Caco-2 (cell line): ENCODE measurements at regions of chr3 and their contacts with region 1.

Region 1: GRCh38 chr3:183099026-183099837 is at the start of gene MCCC1:
- DNase-seq: peak; percentile 99
- H3K4me3 ChIP-seq: peak within 1 kb of the TSS; percentile 92
- H3K4me3 Mint-ChIP-seq: peak within 1 kb of the TSS; percentile 98
- H3K27ac Mint-ChIP-seq: peak within 1 kb of the TSS; percentile 100
- H3K4me1 ChIP-seq: peaks cover 10% of the 10 kb centered on the region; the same call in 1 of the 2 replicates
- H3K4me1 Mint-ChIP-seq: peaks cover 13% of the 10 kb centered on the region
- H3K27me3 ChIP-seq: no peaks in the 10 kb centered on the region
- H3K27me3 Mint-ChIP-seq: no peaks in the 10 kb centered on the region
- CTCF ChIP-seq: no peak
- total RNA-seq, gene MCCC1: 26.2 and 42.8 TPM in 2 replicates

Region 2: GRCh38 chr3:182078316-182078715 is 1020.9 kb before region 1 on chr3:
- CTCF ChIA-PET with region 1: no interaction called
- POLR2A ChIA-PET with region 1: no interaction called
- intact Hi-C with region 1: no loop called
- DNase-seq: no peak
- H3K4me3 ChIP-seq: no peak overlapping the region
- H3K4me3 Mint-ChIP-seq: no peak overlapping the region
- H3K27ac Mint-ChIP-seq: no peak overlapping the region
- H3K4me1 ChIP-seq: peaks cover 9% of the 10 kb centered on the region; the same call in 1 of the 2 replicates
- H3K4me1 Mint-ChIP-seq: peaks cover 16% of the 10 kb centered on the region
- H3K27me3 ChIP-seq: no peaks in the 10 kb centered on the region
- H3K27me3 Mint-ChIP-seq: no peaks in the 10 kb centered on the region
- CTCF ChIP-seq: no peak

Region 3: DNA sequence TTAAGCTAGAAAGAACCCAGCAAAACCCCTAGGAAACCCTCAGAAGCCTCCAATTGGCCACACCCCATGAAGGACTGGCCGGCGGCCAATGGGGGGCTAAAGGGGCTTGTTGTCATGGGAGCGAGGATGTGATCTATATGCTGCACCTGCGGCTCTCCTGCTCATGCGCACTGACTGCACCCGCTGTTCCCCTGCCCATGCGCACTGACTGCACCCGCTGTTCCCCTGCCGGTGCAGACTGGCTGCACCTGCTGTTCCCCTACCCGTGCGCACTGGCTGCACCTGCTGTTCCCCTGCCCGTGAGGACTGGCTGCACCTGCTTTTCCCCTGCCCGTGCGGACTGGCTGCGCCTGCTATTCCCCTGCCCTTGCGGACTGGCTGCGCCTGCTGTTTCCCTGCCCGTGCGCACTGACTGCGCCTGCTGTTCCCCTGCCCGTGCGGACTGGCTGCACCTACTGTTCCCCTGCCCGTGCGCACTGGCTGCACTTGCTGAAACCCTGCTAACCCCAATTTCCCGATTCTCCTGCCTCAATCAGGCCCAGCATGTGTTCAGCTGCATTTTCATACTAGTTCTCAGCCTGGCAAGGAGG is 16.9 kb after region 1 on chr3:
- CTCF ChIA-PET with region 1: interaction called, 3 read pairs
- POLR2A ChIA-PET with region 1: no interaction called
- intact Hi-C with region 1: loop called (anchors 1 kb)
- DNase-seq: peak; percentile 77 to 79
- H3K4me3 ChIP-seq: peak overlapping the region; percentile 41
- H3K4me3 Mint-ChIP-seq: peak overlapping the region; percentile 79
- H3K27ac Mint-ChIP-seq: no peak overlapping the region
- H3K4me1 ChIP-seq: no peaks in the 10 kb centered on the region
- H3K4me1 Mint-ChIP-seq: peaks cover 6% of the 10 kb centered on the region
- H3K27me3 ChIP-seq: no peaks in the 10 kb centered on the region
- H3K27me3 Mint-ChIP-seq: peaks cover 5% of the 10 kb centered on the region
- CTCF ChIP-seq: no peak

Region 4: GRCh38 chr3:183265834-183266417 is 166.7 kb after region 1 on chr3:
- CTCF ChIA-PET with region 1: no interaction called
- POLR2A ChIA-PET with region 1: no interaction called
- intact Hi-C with region 1: no loop called
- DNase-seq: peak in 1 of 2 experiments; percentile 40
- H3K4me3 ChIP-seq: no peak overlapping the region
- H3K4me3 Mint-ChIP-seq: no peak overlapping the region
- H3K27ac Mint-ChIP-seq: no peak overlapping the region
- H3K4me1 ChIP-seq: peaks cover 38% of the 10 kb centered on the region
- H3K4me1 Mint-ChIP-seq: peaks cover 15% of the 10 kb centered on the region
- H3K27me3 ChIP-seq: no peaks in the 10 kb centered on the region
- H3K27me3 Mint-ChIP-seq: no peaks in the 10 kb centered on the region
- CTCF ChIP-seq: no peak